ENCODE measurements at regions of chr10 and their contacts with region 1.

Region 1: DNA sequence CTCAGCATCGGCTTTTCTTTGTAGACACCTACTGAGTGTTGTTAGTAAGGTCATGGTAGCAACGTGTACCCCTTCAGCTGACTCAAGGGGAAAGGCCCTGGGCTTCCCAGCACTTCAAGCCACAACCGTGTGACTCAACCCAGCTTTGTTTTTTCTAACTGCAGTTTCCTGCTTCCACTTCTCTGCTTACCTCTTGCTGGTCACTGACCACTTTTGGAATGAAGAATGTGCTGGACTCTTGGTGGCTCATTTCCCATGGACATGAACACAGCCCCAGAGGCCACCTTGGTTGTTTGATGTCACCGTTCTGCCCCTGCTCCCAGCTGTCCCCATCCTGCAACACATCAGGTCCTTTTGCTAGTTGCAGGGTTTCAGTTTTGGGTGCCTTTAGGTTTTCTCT is 69.5 kb upstream of the ZNF438 start:
- DNase-seq: peak; percentile 91
- H3K4me3 Mint-ChIP-seq: peak overlapping the region; percentile 50
- H3K27ac Mint-ChIP-seq: peak overlapping the region; percentile 85
- H3K4me1 Mint-ChIP-seq: peaks cover 44% of the 10 kb centered on the region
- H3K27me3 Mint-ChIP-seq: no peaks in the 10 kb centered on the region

Region 2: DNA sequence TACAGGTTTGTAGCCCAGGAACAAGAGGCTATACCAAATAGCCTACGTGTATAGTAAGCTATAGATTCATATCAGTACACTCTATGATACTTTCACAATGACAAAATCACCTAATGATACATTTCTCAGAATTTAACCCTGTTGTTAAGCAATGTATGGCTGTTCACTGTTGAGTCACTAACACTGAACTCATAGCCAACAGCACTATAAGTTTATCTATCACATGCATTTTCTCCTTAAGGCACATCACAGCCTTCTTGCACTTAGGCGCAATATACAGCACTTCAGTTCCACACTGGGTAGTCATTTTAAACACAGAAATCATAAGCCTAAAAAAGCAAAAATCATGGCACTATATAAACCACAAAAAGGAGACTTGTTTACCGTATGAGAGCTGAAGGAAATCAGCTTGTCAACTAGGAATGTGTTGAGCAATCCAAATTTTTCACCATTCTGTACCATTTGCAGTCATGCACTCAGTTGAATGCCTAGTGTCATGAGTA is 115.0 kb before region 1 on chr10:
- CTCF ChIA-PET with region 1: no interaction called
- intact Hi-C with region 1: loop called (anchors 2 kb)
- DNase-seq: no peak
- H3K4me3 Mint-ChIP-seq: no peak overlapping the region
- H3K27ac Mint-ChIP-seq: peak overlapping the region; percentile 55
- H3K4me1 Mint-ChIP-seq: peaks cover 12% of the 10 kb centered on the region
- H3K27me3 Mint-ChIP-seq: no peaks in the 10 kb centered on the region

Region 3: DNA sequence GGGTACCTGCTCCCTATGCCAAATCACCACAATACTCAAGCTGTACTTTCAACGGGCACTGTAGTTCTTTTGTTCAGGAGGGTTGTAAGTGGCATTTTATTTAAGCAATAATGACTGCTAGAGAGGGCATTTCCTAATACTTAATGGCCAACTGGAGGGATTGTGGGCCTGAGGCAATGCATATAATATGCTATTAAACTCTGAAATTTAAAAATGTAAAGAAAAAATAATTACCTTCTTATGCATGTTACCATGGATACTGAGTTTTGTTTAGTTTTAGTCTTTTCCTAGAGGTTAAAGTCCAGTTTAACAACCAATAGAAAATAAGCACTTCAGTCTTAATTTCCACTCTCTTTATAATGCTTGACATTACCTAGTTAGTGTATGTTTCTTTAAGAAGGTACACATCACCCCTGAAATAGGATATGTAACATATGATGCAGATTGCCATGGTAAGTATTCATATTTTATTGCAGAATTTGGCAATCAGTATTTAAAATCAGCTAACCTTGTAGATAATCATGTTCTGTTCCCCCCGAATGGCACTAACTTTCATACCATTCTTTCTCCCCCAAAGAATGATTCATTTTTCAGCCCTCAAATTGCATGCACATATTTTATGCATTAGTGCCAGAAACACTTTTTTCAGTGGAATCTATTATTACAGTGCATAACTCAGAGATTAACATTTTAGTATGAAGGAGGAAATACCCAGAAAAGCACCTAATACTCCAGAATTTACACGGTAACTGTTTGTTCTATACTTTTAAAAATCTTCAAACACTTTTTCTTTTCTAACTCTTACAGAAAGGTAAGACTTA is 20.8 kb after region 1 on chr10:
- CTCF ChIA-PET with region 1: no interaction called
- intact Hi-C with region 1: loop called (anchors 1 kb)
- DNase-seq: no peak
- H3K4me3 Mint-ChIP-seq: no peak overlapping the region
- H3K27ac Mint-ChIP-seq: no peak overlapping the region
- H3K4me1 Mint-ChIP-seq: peaks cover 28% of the 10 kb centered on the region
- H3K27me3 Mint-ChIP-seq: no peaks in the 10 kb centered on the region

Region 4: DNA sequence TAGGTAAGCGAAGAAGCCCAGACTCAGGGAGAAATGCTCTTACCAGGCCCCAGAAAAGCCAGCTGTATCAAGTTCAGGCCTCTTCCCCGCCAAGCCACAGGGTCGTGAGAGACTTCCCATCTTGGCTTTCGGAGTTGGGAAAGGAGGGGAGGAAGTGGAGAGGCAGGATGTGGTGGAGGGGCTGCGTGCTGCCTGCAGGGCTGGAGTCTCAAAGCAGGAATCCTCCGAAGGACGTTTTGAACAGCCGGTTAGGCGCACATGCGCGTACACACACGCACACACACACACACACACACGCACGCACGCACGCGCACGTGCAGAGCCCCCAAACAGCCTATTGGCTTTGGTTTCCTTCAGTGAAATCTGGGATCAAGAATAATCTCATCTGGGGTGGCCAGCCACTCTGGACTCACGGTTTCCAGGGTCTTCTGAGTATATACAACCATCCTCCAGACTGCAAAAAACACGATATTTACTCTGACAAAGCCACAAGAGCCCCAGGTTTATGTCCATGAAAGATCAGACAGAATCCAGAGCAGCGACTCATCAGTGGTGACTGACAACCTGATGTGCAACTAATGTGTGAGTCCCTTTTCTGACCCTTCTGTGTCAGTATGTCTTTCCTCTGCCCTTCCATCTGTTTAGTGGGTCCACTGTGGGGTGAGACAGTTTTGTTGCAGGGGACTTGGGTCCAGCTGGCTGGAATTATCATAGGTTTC is 45.5 kb after region 1 on chr10:
- CTCF ChIA-PET with region 1: no interaction called
- intact Hi-C with region 1: loop called (anchors 2 kb)
- DNase-seq: peak; percentile 49
- H3K4me3 Mint-ChIP-seq: peak overlapping the region; percentile 6
- H3K27ac Mint-ChIP-seq: no peak overlapping the region
- H3K4me1 Mint-ChIP-seq: peaks cover 19% of the 10 kb centered on the region
- H3K27me3 Mint-ChIP-seq: peaks cover 7% of the 10 kb centered on the region

Region 5: DNA sequence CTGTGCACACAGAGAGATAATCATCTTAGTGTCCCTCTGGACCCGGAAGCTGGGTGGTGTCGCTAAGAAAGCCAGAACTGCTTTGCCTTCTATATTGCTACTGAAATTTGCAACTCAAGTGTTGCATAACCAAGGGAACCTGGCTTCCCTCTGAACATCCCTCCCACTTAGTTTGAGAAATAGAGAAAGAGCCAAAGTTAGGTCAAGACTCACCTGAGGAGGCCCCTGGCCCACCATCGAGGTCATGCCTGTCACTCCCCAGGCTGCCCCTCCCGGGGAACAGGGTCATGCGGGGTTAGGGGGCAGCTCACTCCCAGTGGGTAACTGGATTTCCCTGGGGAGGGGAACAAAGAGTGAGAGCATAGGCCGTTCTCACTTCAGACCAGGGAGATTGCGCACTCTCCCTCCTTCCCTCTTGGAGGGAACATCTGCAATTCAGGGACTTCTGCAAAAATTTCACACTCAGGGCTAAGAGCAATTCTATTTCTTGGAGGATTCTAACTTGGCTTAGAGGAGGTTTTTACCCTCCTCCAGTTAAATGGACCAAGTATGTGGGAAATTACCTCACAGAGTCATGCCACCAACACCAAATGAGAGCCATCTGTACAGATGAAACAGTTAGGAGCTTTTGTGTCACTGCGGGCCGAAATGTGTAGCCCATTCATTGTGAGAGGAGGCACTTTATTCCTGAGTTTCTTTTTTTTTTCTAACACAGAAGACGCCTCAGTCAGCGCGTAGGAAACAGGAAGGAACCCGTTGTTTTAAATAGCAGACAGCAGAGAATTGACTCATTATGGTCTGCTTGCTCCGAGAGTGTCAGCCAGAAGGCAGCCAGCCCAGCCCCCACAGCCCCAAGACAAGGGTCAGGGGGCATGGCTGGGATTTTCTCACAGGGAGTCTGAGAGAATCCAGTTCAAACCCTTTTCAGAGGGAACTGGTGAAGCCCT is 606.2 kb after region 1 on chr10:
- CTCF ChIA-PET with region 1: no interaction called
- intact Hi-C with region 1: loop called (anchors 1 kb)
- DNase-seq: peak; percentile 85
- H3K4me3 Mint-ChIP-seq: peak overlapping the region; percentile 5
- H3K27ac Mint-ChIP-seq: peak overlapping the region; percentile 83
- H3K4me1 Mint-ChIP-seq: peaks cover 22% of the 10 kb centered on the region
- H3K27me3 Mint-ChIP-seq: no peaks in the 10 kb centered on the region

Region 6: DNA sequence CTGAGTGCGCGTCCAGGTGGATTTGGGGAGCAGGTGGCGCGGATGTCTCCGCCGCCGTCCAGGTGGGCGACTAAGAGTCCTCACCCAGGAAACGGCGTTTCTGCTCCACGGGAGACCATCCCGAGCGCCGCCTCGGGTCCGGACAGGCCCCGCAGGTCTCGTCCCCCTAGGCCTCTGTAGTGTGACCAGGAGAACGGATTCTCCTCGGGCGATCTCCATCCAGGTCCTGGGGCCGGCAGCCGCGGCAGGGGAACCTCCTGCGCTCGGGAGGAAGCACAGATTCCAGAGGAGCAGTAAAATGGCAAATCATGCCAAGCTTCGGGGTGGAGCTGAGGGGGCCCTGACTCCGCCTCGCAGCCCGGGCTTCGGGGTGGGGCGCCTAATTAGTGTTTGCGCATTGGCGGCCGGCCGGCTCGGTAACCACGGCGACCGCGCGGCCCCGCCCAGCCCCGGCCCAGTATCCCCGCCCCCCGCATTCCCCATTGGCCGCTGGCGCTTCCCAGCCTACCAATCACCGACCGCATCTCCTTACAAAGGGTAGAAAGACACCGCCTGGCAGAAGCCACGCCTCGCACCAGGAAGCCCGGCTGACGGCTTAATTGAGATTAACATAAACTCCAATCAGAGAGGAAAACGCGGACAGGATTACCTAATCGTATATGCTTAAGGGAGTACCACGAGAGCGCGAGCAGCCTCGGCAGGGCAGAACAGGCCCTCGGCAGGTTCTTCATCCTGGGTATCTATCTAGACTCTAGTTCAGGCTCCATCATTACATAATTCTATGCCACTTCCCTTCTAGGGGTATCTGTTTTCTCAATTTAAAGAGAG is 658.9 kb after region 1 on chr10:
- CTCF ChIA-PET with region 1: no interaction called
- intact Hi-C with region 1: loop called (anchors 1 kb)
- DNase-seq: peak; percentile 96
- H3K4me3 Mint-ChIP-seq: peak overlapping the region; percentile 94
- H3K27ac Mint-ChIP-seq: peak overlapping the region; percentile 95
- H3K4me1 Mint-ChIP-seq: peaks cover 18% of the 10 kb centered on the region
- H3K27me3 Mint-ChIP-seq: no peaks in the 10 kb centered on the region

Measured in activated naive CD4-positive, alpha-beta T cell treated with anti-CD3 and anti-CD28 coated beads for 36 hours (primary cell).